ENCODE measurements at regions of chr6 and their contacts with region 1.

Region 1: DNA sequence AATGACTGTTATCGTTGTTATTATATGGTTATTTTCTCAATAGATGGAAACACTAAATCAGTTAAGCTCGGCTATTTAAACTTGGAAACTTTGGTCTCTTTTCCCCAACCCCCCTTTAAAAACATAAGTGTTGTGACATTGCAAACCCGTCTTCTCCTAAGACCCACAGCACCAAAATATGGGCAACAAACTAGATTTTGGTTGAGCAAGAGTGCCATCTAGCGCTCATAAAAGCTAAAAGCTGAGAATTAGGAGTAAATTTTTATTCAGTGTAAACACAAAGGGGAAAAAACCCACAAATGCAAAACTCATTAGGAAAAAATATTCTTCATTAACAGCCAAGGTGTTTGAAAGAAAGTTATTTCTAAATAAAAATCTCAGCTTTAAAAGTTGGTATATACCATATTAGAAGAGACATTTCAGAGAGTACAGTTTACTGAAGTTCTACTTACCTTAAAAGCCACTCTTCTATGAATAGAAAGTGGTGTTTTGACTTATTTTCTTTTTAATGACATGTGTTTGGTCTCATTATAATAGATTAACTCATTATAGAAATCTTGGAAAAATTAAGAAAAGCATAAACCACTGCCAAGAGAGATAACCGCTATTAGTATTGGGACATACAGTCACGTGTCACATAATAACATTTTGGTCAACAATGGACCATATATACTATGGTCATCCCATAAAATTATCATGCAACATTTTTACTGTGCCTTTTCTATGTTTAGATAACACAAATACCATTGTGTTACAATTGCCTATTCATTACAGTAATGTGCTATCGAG is 21.1 kb downstream of the SESN1 start:
- DNase-seq: peak; percentile 58
- H3K4me3 Mint-ChIP-seq: no peak overlapping the region
- H3K27ac Mint-ChIP-seq: no peak overlapping the region
- H3K4me1 Mint-ChIP-seq: peaks cover 2% of the 10 kb centered on the region
- H3K27me3 Mint-ChIP-seq: no peaks in the 10 kb centered on the region
- CTCF ChIP-seq: peak; percentile 58

Region 2: GRCh38 chr6:108541838-108542759 is 531.4 kb before region 1 on chr6:
- CTCF ChIA-PET with region 1: interaction called, 12 read pairs
- intact Hi-C with region 1: loop called (anchors 1 kb)
- DNase-seq: peak; percentile 76
- H3K4me3 Mint-ChIP-seq: peak overlapping the region; percentile 59
- H3K27ac Mint-ChIP-seq: peak overlapping the region; percentile 5
- H3K4me1 Mint-ChIP-seq: no peaks in the 10 kb centered on the region
- H3K27me3 Mint-ChIP-seq: no peaks in the 10 kb centered on the region
- CTCF ChIP-seq: peak; percentile 74

Region 3: GRCh38 chr6:108835218-108835850 is 238.2 kb before region 1 on chr6:
- CTCF ChIA-PET with region 1: no interaction called
- intact Hi-C with region 1: loop called (anchors 1 kb)
- DNase-seq: peak; percentile 87
- H3K4me3 Mint-ChIP-seq: no peak overlapping the region
- H3K27ac Mint-ChIP-seq: no peak overlapping the region
- H3K4me1 Mint-ChIP-seq: peaks cover 8% of the 10 kb centered on the region
- H3K27me3 Mint-ChIP-seq: no peaks in the 10 kb centered on the region
- CTCF ChIP-seq: peak; percentile 95

Region 4: DNA sequence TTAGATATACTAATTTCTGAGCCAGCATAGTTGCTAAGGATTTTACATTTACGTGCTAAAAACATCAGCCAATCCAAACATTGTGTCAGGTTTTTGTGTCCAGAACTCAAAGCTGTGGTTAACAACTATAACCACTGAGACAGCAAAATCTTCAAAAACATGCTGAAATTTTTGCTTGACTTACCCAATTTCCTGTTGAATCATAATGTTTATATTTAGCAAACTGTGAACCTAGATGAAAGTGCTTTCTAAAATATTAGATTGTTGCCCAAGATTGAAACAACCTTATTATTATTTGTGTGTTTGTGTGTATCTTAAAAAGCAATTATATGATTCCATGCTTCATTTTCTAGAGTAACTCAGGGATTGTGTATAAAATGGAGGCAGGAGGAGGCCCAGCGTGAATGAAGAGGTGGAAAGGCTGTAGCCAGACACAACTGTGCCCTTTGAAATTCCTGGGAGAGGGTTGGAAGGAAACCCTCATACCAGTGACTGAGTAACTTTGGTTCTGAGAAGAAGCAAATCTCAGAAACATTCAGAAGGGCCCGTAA is 177.4 kb before region 1 on chr6:
- CTCF ChIA-PET with region 1: no interaction called
- intact Hi-C with region 1: loop called (anchors 5 kb)
- DNase-seq: no peak
- H3K4me3 Mint-ChIP-seq: no peak overlapping the region
- H3K27ac Mint-ChIP-seq: no peak overlapping the region
- H3K4me1 Mint-ChIP-seq: no peaks in the 10 kb centered on the region
- H3K27me3 Mint-ChIP-seq: no peaks in the 10 kb centered on the region
- CTCF ChIP-seq: no peak

Region 5: DNA sequence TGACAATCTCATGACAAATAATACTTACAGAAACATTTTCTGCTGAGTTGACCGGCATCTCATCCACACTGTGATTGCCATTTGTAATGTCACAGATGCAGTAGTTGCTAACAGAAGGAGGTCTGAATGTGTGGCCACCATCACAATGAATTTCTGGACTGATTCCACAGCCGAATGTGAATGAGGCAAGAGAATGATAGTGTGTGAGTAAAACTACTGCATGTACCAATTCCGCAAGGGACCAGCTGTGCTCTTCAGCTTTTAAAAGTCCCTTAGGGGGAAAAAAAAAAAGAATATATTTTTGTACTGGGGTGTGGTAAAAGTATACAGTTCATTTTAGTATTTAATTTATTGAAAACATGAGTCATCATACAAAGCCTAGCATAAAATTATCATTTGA is 75.1 kb before region 1 on chr6:
- CTCF ChIA-PET with region 1: no interaction called
- intact Hi-C with region 1: no loop called
- DNase-seq: no peak
- H3K4me3 Mint-ChIP-seq: no peak overlapping the region
- H3K27ac Mint-ChIP-seq: no peak overlapping the region
- H3K4me1 Mint-ChIP-seq: no peaks in the 10 kb centered on the region
- H3K27me3 Mint-ChIP-seq: no peaks in the 10 kb centered on the region
- CTCF ChIP-seq: no peak

Region 6: DNA sequence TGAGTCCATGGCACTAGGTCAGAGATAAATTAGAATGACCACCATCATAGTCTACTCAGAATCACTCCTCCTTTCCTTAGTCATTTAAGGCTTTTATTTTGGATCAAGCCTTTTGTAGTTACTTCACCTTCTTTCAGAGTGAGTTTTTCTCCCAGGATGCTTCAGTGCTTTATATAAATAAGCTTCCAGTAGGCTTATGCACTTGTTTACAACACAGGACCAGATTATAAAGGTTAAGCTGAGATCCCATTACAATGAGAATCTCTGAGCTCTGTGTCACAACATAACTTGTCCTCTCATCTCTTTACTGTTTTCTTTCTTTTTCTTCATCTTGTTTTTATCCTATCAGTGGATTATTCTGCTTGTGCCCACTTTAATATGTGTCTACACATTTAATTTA is 69.7 kb after region 1 on chr6:
- CTCF ChIA-PET with region 1: no interaction called
- intact Hi-C with region 1: no loop called
- DNase-seq: no peak
- H3K4me3 Mint-ChIP-seq: no peak overlapping the region
- H3K27ac Mint-ChIP-seq: peak overlapping the region; percentile 3
- H3K4me1 Mint-ChIP-seq: no peaks in the 10 kb centered on the region
- H3K27me3 Mint-ChIP-seq: no peaks in the 10 kb centered on the region
- CTCF ChIP-seq: no peak

Measured in Calu3 (cell line).